ENCODE measurements at regions of chr10 and their contacts with region 1.

Region 1: GRCh38 chr10:11757821-11758463 is 15.8 kb downstream of the ECHDC3 start:
- DNase-seq: peak; percentile 85
- ATAC-seq: peak; percentile 98
- H3K4me3 ChIP-seq: no peak overlapping the region
- H3K4me3 Mint-ChIP-seq: no peak overlapping the region
- H3K27ac ChIP-seq: no peak overlapping the region
- H3K27ac Mint-ChIP-seq: peak overlapping the region; percentile 72
- H3K4me1 ChIP-seq: peaks cover 0 to 7% of the 10 kb centered on the region in 2 donors
- H3K4me1 Mint-ChIP-seq: peaks cover 6% of the 10 kb centered on the region
- H3K27me3 ChIP-seq: no peaks in the 10 kb centered on the region
- H3K27me3 Mint-ChIP-seq: no peaks in the 10 kb centered on the region
- CTCF ChIP-seq: peak; percentile 90

Region 2: GRCh38 chr10:11434324-11434723 is 323.6 kb before region 1 on chr10:
- CTCF ChIA-PET with region 1: interaction called, 7 read pairs
- POLR2A ChIA-PET with region 1: no interaction called
- intact Hi-C with region 1: loop called (anchors 1 kb)
- DNase-seq: no peak
- ATAC-seq: no peak
- H3K4me3 ChIP-seq: no peak overlapping the region
- H3K4me3 Mint-ChIP-seq: no peak overlapping the region
- H3K27ac ChIP-seq: no peak overlapping the region
- H3K27ac Mint-ChIP-seq: no peak overlapping the region
- H3K4me1 ChIP-seq: no peaks in the 10 kb centered on the region
- H3K4me1 Mint-ChIP-seq: no peaks in the 10 kb centered on the region
- H3K27me3 ChIP-seq: no peaks in the 10 kb centered on the region
- H3K27me3 Mint-ChIP-seq: peaks cover 13% of the 10 kb centered on the region
- CTCF ChIP-seq: no peak

Region 3: GRCh38 chr10:11505639-11506038 is 252.3 kb before region 1 on chr10:
- CTCF ChIA-PET with region 1: interaction called, 30 read pairs
- POLR2A ChIA-PET with region 1: no interaction called
- intact Hi-C with region 1: no loop called
- DNase-seq: no peak
- ATAC-seq: no peak
- H3K4me3 ChIP-seq: no peak overlapping the region
- H3K4me3 Mint-ChIP-seq: no peak overlapping the region
- H3K27ac ChIP-seq: no peak overlapping the region
- H3K27ac Mint-ChIP-seq: peak overlapping the region; percentile 28
- H3K4me1 ChIP-seq: no peaks in the 10 kb centered on the region
- H3K4me1 Mint-ChIP-seq: peaks cover 21% of the 10 kb centered on the region
- H3K27me3 ChIP-seq: no peaks in the 10 kb centered on the region
- H3K27me3 Mint-ChIP-seq: no peaks in the 10 kb centered on the region
- CTCF ChIP-seq: no peak

Region 4: DNA sequence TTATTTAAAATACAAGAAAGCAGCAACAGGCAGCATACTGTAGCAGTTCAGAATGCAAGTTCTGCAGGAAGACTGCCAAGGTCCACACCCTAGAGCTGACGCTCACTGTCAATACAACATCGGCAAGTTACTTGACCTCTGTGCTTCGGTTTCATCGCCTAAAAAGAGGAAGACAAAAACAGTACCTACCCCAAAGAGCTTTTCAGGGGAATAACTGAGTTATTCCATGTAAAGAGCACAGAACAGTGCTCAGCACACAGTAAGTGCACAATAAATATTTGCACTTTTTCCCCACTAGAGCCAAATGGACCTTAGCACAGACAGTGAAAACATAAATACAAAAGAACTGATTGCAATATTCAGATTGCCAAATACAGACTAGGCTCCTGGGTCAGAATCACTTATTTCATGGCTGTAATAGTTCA is 235.1 kb before region 1 on chr10:
- CTCF ChIA-PET with region 1: interaction called, 43 read pairs
- POLR2A ChIA-PET with region 1: no interaction called
- intact Hi-C with region 1: no loop called
- DNase-seq: no peak
- ATAC-seq: peak; percentile 60
- H3K4me3 ChIP-seq: no peak overlapping the region
- H3K4me3 Mint-ChIP-seq: no peak overlapping the region
- H3K27ac ChIP-seq: peak overlapping the region in 1 of 2 donors; percentile 13
- H3K27ac Mint-ChIP-seq: peak overlapping the region; percentile 39
- H3K4me1 ChIP-seq: peaks cover 9 to 20% of the 10 kb centered on the region in 2 donors
- H3K4me1 Mint-ChIP-seq: peaks cover 43% of the 10 kb centered on the region
- H3K27me3 ChIP-seq: no peaks in the 10 kb centered on the region
- H3K27me3 Mint-ChIP-seq: no peaks in the 10 kb centered on the region
- CTCF ChIP-seq: no peak

Region 5: GRCh38 chr10:11742005-11742778 is 15.8 kb before region 1 on chr10 and contains the start of gene ECHDC3:
- CTCF ChIA-PET with region 1: interaction called, 11 read pairs
- POLR2A ChIA-PET with region 1: no interaction called
- intact Hi-C with region 1: loop called (anchors 1 kb)
- DNase-seq: peak; percentile 82
- ATAC-seq: peak; percentile 91
- H3K4me3 ChIP-seq: peak within 1 kb of the TSS; percentile 13 to 73 (median 62)
- H3K4me3 Mint-ChIP-seq: peak within 1 kb of the TSS; percentile 85
- H3K27ac ChIP-seq: peak within 1 kb of the TSS in 1 of 2 donors; percentile 43
- H3K27ac Mint-ChIP-seq: peak within 1 kb of the TSS; percentile 80
- H3K4me1 ChIP-seq: peaks cover 5 to 13% of the 10 kb centered on the region in 2 donors
- H3K4me1 Mint-ChIP-seq: peaks cover 20% of the 10 kb centered on the region
- H3K27me3 ChIP-seq: no peaks in the 10 kb centered on the region
- H3K27me3 Mint-ChIP-seq: no peaks in the 10 kb centered on the region
- CTCF ChIP-seq: no peak
- total RNA-seq, gene ECHDC3: 8.7 and 9.6 TPM in 2 replicates